Head of caudate nucleus (tissue), 42 donors: ENCODE measurements at regions of chr5 and their contacts with region 1.

Region 1: DNA sequence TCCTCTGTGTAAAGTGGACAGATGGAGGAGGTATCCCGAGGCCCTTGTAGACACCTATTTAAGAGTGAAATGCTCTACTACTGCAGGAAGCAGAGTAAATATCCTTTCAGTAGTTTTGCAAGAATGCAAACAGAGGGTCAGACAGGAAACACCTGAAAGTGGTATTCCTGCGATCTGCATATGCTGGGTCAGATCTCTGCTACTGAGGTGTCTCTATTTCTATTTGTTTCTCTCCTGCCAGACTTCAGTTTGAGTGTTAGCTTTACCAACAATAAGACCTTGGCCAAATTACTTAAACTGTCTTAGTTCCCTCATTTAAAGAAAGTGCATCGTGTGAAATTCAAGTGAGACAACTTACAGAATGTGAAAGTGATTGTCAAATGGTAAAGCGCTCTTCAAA is 47.6 kb downstream of the JAKMIP2 start:
- DNase-seq: no peak

Region 2: GRCh38 chr5:147567917-147568598 is 166.8 kb before region 1 on chr5:
- intact Hi-C with region 1: no loop called
- DNase-seq: no peak

Region 3: DNA sequence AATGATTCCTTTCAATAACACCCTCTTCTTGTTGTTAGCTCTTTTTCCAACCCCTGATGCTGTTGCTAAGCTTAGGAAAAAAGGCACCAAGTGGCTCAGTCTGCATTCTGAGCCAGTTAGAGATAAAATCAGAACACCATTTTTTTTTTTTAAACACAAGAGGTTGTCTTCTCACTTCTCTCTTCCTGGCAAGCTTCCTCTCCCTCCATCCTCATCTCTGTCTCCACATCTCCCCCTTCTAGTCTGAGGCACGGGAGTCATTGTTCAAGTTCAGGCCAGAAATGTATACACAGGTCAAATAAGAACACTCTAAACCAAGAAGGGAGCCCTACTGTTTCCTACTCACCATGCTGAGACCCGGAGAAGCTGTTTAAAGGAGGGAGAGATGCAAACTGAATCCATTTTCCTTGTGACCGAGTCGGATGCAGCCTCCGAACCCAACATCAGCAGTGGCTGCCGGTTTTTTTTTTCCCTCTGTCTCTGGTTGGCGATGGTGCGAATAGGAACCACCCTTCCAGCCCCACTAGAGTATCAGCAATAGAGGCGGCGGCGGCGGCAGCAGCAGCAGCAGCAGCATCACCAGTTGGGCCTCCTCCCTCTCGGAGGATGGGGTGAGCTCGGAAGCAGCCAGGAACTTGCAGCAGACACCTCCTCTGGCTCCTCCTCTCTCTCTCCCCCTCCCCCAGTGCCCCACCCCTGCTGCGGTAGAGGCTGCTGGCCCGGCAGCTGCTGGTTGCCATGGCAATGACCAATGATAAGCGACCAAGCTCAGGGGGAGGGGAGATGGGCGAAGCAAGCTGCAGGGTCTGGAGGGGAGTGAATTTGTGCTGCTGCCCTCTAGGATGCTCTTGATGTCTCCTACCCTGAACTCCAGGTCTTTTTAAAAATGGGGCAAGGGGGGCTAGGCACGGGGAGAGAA is 47.5 kb after region 1 on chr5 and contains the start of gene JAKMIP2:
- intact Hi-C with region 1: loop called (anchors 5 kb)
- DNase-seq: peak; percentile 92 to 100 (median 98)